ENCODE measurements at regions of chr11 and their contacts with region 1.

Region 1: GRCh38 chr11:67401495-67402191 is at the start of gene PPP1CA:
- DNase-seq: peak; percentile 96
- ATAC-seq: peak; percentile 72
- H3K4me3 Mint-ChIP-seq: peak within 1 kb of the TSS; percentile 86
- H3K27ac Mint-ChIP-seq: peak within 1 kb of the TSS; percentile 91
- H3K4me1 Mint-ChIP-seq: peaks cover 77% of the 10 kb centered on the region
- H3K27me3 Mint-ChIP-seq: no peaks in the 10 kb centered on the region
- CTCF ChIP-seq: no peak
- total RNA-seq, gene PPP1CA: 349 and 354 TPM in 2 replicates

Region 2: DNA sequence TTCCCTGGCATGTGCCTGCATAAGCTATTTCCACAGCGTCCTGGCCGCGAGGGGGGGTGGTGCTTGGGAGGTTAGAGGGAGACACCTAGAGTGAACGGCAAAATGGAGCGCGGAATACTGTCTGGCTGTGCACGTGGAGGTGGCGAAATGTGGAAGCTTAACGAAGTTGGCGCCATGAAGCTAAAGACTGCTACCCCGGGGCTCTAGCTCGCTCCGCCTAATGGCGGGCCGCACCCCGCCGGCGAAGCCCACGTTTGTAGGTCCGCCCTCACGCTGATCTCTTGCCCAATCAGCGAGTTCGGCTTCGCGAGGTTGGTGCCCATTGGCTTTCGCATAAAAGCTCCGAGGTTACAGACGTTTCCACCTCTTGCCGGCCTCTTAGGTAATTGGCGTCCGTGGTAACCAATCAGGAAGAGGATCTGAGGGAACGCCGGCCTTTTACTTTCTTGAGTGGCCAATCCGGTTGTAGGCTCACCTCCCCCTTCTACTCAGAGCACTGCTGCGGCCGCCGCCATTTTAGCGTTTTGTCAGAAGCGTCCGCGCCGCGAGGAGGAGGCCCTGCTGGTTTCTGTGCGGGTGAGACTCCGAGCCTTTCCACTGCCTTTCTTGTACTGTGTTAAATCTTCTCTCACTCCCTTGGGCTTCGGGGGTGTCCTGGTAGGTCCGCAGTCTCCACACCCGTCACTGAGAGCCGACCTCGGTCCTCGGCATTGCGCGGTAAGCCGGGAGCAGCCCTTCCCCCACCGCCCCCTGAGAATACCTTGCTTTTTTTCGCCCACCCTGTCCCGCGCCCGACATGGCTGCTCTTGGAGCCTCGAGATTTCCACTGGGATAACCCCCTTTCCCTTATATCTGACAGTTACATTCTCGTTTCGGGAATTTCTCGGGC is 763.2 kb before region 1 on chr11 and contains the start of gene RBM4:
- CTCF ChIA-PET with region 1: no interaction called
- POLR2A ChIA-PET with region 1: no interaction called
- intact Hi-C with region 1: no loop called
- DNase-seq: peak; percentile 78
- ATAC-seq: peak; percentile 95
- H3K4me3 Mint-ChIP-seq: peak within 1 kb of the TSS; percentile 99
- H3K27ac Mint-ChIP-seq: peak within 1 kb of the TSS; percentile 98
- H3K4me1 Mint-ChIP-seq: peaks cover 67% of the 10 kb centered on the region
- H3K27me3 Mint-ChIP-seq: no peaks in the 10 kb centered on the region
- CTCF ChIP-seq: no peak
- total RNA-seq, gene RBM4: 197 and 202 TPM in 2 replicates

Region 3: DNA sequence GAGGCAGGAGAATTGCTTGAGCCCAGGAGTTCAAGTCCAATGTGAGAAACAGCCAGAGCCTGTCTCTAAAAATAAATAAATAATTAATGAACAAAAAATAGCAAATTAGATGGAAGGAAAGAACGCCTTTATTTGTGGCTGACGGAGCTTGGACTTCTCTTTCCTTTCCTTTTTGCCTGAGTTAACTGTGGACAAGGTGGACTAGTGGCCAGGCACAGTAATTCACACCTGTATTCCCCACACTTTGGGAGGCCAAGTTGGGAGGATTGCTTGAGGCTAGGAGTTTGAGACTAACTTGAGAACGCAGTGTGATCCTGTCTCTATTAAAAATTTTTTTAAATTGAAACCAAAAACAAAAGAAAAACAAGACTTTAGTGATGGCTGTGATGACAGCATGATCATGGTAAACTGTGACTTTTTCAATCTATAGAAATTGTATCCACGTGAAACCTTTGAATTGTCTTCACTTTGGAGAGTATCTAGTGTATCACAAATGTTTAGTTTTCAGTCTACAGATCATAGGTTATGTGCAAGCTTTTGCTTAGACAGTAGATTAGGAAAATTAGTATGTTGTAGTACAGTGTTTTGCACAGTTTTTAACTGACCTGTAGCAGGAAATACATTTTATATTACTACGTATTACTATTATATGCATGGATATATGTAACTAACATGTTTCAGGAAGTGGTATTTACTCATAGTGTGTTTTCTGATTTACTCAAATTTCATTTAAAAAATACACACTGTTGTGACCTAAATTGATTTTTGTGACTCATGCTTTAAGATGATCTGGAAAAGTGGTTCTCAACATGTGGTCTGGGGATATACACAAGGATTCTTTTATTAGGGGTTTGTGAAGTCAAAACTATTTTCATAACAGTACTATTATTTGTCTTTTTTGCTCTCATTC is 240.5 kb before region 1 on chr11:
- CTCF ChIA-PET with region 1: no interaction called
- POLR2A ChIA-PET with region 1: no interaction called
- intact Hi-C with region 1: no loop called
- DNase-seq: no peak
- ATAC-seq: no peak
- H3K4me3 Mint-ChIP-seq: no peak overlapping the region
- H3K27ac Mint-ChIP-seq: peak overlapping the region; percentile 7
- H3K4me1 Mint-ChIP-seq: peaks cover 32% of the 10 kb centered on the region
- H3K27me3 Mint-ChIP-seq: no peaks in the 10 kb centered on the region
- CTCF ChIP-seq: no peak

Region 4: DNA sequence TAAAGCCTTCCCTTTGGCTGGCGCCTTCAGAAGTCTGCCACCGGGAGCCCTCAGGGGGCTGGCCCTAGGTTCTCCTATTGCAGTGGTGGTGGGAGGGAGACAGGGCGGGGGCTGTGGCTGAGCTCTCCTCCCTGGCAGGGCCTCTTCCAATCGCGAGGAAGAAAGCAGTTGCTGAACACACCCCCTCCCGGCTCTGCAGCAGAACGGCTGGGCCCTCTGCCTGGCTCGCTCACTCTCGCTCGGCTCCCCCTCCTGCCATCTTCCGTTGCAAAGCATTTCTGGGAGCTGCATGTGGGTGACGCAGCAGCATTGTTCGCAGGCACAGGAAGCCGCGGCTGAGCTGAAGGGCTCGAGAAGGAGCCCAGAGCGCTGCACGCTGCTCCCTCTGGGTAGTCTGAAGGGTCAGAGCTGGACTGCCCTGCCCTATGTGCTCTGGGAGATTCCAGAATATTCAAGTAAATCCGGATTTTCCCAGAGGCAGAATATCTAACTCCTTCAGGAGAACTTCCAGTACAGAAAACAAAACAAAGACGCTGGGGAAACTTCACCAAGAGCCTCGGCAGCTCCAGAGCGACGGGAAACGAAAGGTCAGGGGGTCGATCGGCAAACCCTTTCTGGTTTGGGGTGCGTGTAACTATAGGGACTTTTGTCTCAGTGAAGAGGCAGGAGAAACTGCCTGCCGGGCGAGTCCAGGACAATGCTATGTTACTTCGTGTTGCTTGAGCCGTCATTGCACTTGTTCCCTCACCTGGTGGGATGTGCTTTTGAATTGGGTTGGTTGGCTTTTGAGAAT is 161.7 kb before region 1 on chr11:
- CTCF ChIA-PET with region 1: no interaction called
- POLR2A ChIA-PET with region 1: interaction called, 11 read pairs
- intact Hi-C with region 1: no loop called
- DNase-seq: peak; percentile 80
- ATAC-seq: peak; percentile 92
- H3K4me3 Mint-ChIP-seq: peak overlapping the region; percentile 99
- H3K27ac Mint-ChIP-seq: peak overlapping the region; percentile 96
- H3K4me1 Mint-ChIP-seq: peaks cover 48% of the 10 kb centered on the region
- H3K27me3 Mint-ChIP-seq: no peaks in the 10 kb centered on the region
- CTCF ChIP-seq: no peak

Region 5: GRCh38 chr11:67373925-67374618 is 27.6 kb before region 1 on chr11:
- CTCF ChIA-PET with region 1: no interaction called
- POLR2A ChIA-PET with region 1: interaction called, 14 read pairs
- intact Hi-C with region 1: no loop called
- DNase-seq: peak; percentile 63
- ATAC-seq: peak; percentile 47
- H3K4me3 Mint-ChIP-seq: peak overlapping the region; percentile 87
- H3K27ac Mint-ChIP-seq: peak overlapping the region; percentile 79
- H3K4me1 Mint-ChIP-seq: peaks cover 57% of the 10 kb centered on the region
- H3K27me3 Mint-ChIP-seq: no peaks in the 10 kb centered on the region
- CTCF ChIP-seq: no peak

Region 6: GRCh38 chr11:67420646-67421420 is 19.2 kb after region 1 on chr11:
- CTCF ChIA-PET with region 1: interaction called, 53 read pairs
- POLR2A ChIA-PET with region 1: interaction called, 693 read pairs
- intact Hi-C with region 1: loop called (anchors 1 kb)
- DNase-seq: peak; percentile 98
- ATAC-seq: peak; percentile 85
- H3K4me3 Mint-ChIP-seq: peak overlapping the region; percentile 79
- H3K27ac Mint-ChIP-seq: peak overlapping the region; percentile 83
- H3K4me1 Mint-ChIP-seq: peaks cover 52% of the 10 kb centered on the region
- H3K27me3 Mint-ChIP-seq: no peaks in the 10 kb centered on the region
- CTCF ChIP-seq: no peak

Region 7: GRCh38 chr11:67457453-67457852 is 55.8 kb after region 1 on chr11:
- CTCF ChIA-PET with region 1: interaction called, 7 read pairs
- POLR2A ChIA-PET with region 1: interaction called, 35 read pairs
- intact Hi-C with region 1: loop called (anchors 1 kb)
- DNase-seq: no peak
- ATAC-seq: no peak
- H3K4me3 Mint-ChIP-seq: peak overlapping the region; percentile 13
- H3K27ac Mint-ChIP-seq: peak overlapping the region; percentile 84
- H3K4me1 Mint-ChIP-seq: peaks cover 53% of the 10 kb centered on the region
- H3K27me3 Mint-ChIP-seq: no peaks in the 10 kb centered on the region
- CTCF ChIP-seq: no peak

Region 8: GRCh38 chr11:67507864-67508485 is 106.3 kb after region 1 on chr11 and contains the start of gene CDK2AP2:
- CTCF ChIA-PET with region 1: interaction called, 13 read pairs
- POLR2A ChIA-PET with region 1: interaction called, 25 read pairs
- intact Hi-C with region 1: loop called (anchors 1 kb)
- DNase-seq: peak; percentile 90
- ATAC-seq: peak; percentile 77
- H3K4me3 Mint-ChIP-seq: peak within 1 kb of the TSS; percentile 88
- H3K27ac Mint-ChIP-seq: peak within 1 kb of the TSS; percentile 94
- H3K4me1 Mint-ChIP-seq: peaks cover 42% of the 10 kb centered on the region
- H3K27me3 Mint-ChIP-seq: no peaks in the 10 kb centered on the region
- CTCF ChIP-seq: no peak
- total RNA-seq, gene CDK2AP2: 67.1 and 68.5 TPM in 2 replicates

Region 9: DNA sequence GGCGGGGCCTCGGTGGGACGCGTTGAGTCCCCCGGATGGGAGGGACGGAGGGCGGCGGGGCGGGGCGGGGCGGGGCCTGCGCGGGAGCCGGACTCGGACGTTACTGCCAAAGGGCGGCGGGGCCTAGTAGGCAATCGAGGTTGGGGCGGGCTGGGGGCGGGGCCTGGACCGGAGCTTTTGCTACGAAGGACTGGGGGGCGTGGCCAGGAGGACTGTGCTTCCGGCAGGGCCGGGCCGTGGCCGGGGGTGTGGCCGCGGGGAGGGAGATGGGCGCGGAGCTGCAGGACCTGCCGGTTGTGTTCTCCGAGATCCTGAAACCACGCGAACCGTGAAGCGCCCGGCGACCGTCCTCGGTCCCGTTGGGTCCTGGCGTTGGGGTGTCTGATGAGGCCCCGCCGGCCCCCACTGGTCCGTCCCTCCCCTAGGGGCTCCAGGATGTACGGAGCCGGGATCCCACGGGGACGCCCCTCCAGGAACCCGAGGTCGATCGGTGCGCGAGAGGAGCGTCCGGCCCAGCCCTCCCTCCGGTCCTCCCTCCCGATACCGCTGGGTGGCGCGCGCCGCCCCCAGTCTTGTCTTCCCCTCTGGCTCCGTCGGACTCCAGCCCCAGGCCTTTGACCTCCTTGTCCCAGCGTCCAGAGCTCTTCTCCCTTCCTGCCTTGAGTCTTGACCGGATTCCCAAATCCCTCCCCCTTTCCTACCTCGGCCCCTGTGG is 228.7 kb after region 1 on chr11:
- CTCF ChIA-PET with region 1: no interaction called
- POLR2A ChIA-PET with region 1: interaction called, 4 read pairs
- intact Hi-C with region 1: loop called (anchors 5 kb)
- DNase-seq: peak; percentile 92
- ATAC-seq: peak; percentile 78
- H3K4me3 Mint-ChIP-seq: peak overlapping the region; percentile 87
- H3K27ac Mint-ChIP-seq: peak overlapping the region; percentile 88
- H3K4me1 Mint-ChIP-seq: peaks cover 13% of the 10 kb centered on the region
- H3K27me3 Mint-ChIP-seq: no peaks in the 10 kb centered on the region
- CTCF ChIP-seq: no peak